Astrocyte of the spinal cord (primary cell): ENCODE measurements at regions of chr1 and their contacts with region 1.

Region 1: DNA sequence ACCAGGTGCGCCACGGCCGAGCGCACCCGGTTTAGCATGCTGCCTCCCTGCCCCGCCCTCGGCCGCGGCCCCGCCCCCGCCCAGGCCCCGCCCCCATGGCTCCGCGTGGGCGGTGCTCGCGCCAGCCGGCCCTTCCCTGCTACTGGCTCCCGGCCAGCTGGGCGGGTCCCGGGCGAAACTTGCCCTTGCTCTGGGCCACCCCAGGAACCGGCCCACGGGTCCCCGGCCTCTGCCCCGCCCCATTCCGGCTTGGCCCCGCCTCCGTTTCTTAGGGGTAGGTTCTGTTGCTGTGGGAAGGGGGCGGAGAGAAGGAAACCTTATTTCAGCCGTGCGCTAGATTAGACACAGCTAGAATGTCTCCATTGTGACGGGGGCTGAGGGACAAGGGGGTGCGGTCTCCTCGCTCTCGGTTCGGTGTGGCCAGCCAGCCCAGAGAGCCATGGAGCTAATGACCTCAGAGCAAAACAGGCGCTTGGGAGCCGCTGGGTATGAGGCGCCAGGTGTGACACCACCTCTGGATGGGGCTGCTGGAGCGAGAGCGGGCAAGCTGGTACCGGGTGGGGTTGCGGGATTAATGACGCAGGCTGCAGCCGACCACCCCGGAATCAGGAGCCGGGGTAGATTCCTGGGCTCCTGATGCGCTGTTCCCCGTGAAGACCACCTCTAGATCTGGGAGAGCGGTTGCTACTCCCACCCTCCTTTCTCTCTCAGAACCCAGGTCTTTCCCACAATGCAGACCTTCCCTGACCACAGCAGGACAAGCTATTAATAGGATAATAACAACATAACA is at the start of gene PPM1J:
- DNase-seq: peak; percentile 92
- H3K4me3 ChIP-seq: peak within 1 kb of the TSS; percentile 63
- CTCF ChIP-seq: no peak

Region 2: DNA sequence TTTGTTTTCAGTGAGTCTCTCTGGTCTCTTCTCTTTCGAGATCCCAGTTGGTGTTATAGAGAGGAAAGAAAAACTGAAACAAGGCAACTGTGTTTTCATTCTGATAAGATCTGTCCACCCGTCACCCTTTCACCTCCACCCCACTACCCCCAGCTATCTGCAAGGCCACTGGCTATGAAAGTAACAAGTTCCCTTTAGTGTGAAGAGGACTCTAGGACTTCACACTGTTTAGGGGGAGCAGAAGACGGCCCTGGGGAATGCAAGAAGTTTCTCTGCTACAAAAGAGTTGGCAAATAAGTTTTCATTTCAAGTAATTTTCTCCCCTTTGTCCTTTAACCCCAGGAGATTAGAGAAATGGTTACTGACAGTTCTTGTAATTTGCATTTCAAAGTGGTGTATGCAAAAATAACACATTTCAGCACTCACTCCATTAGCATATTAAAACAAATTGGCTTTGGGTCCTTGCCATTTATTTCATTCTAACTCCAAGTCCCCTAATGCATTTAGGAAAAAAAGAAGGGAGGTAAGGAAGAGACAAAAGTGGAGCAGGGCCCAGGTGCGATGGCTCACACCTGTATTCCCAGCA is 79.3 kb after region 1 on chr1:
- in situ Hi-C with region 1: loop called (anchors 5 kb)
- DNase-seq: no peak
- H3K4me3 ChIP-seq: no peak overlapping the region
- CTCF ChIP-seq: no peak

Region 3: DNA sequence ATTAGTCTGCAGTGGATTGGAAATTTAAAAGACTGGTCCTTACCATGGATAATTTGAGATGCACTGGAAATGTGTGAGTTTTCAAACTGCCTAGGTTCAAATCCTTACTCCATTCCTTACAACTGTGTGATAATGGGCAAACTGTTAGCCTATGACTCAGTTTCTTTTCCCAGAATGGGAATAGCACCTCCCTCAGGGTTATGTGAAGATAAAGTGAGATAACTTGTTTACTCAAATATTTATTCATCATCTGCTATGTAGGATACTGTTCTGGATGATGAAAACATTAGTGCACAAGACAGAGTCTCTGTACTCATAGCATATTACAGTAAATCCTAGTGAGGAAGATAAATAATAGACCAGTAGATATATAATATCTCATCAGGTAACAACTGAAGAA is 386.1 kb after region 1 on chr1:
- in situ Hi-C with region 1: no loop called
- DNase-seq: no peak
- H3K4me3 ChIP-seq: no peak overlapping the region
- CTCF ChIP-seq: no peak

Region 4: GRCh38 chr1:114397601-114398000 is 1682.1 kb after region 1 on chr1:
- in situ Hi-C with region 1: no loop called
- DNase-seq: no peak
- H3K4me3 ChIP-seq: no peak overlapping the region
- CTCF ChIP-seq: no peak